Colonic mucosa (tissue), 4 donors: ENCODE measurements at regions of chr6 and their contacts with region 1.

Region 1: GRCh38 chr6:89610149-89610642 is 28.4 kb downstream of the LYRM2 start:
- DNase-seq: peak; percentile 75
- H3K4me3 ChIP-seq: no peak overlapping the region
- H3K27ac ChIP-seq: no peak overlapping the region
- H3K4me1 ChIP-seq: no peaks in the 10 kb centered on the region
- H3K27me3 ChIP-seq: no peaks in the 10 kb centered on the region
- CTCF ChIP-seq: peak; percentile 81

Region 2: GRCh38 chr6:89432875-89433251 is 177.3 kb before region 1 on chr6 and contains the start of gene ANKRD6:
- intact Hi-C with region 1: loop called (anchors 2 kb)
- DNase-seq: peak; percentile 73
- H3K4me3 ChIP-seq: peak within 1 kb of the TSS; percentile 87
- H3K27ac ChIP-seq: no peak within 1 kb of the TSS
- H3K4me1 ChIP-seq: peaks cover 5% of the 10 kb centered on the region
- H3K27me3 ChIP-seq: no peaks in the 10 kb centered on the region
- CTCF ChIP-seq: peak; percentile 56
- total RNA-seq, gene ANKRD6: 1.6 to 3.1 TPM

Region 3: GRCh38 chr6:89909991-89910390 is 299.8 kb after region 1 on chr6:
- intact Hi-C with region 1: no loop called
- DNase-seq: no peak
- H3K4me3 ChIP-seq: no peak overlapping the region
- H3K27ac ChIP-seq: no peak overlapping the region
- H3K4me1 ChIP-seq: no peaks in the 10 kb centered on the region
- H3K27me3 ChIP-seq: no peaks in the 10 kb centered on the region
- CTCF ChIP-seq: no peak